ENCODE measurements at regions of chr10 and their contacts with region 1.

Region 1: DNA sequence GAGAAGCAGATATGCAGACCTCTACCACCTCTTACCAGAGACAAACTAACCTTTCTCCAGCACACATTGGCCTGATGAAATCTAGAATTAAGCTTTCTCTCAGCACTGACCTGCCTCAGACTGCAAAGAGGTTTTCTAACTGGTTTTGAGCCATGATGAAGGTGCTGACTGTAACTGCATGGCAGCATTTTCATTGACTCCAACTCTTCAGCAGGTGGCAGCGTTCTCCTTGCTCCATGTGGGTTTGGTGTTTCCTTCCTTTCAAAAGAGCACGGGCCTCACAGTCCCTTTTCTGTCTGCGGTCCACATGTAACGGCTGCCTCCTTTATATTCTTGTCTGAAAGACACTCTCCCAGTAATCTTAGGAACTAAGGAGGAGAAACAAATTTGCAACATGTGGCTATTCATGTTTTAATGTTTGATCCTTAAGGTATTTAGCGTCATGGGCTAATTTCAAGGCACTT is 12.6 kb downstream of the KLLN start:
- DNase-seq: peak; percentile 54
- ATAC-seq: peak; percentile 93 to 97

Region 2: DNA sequence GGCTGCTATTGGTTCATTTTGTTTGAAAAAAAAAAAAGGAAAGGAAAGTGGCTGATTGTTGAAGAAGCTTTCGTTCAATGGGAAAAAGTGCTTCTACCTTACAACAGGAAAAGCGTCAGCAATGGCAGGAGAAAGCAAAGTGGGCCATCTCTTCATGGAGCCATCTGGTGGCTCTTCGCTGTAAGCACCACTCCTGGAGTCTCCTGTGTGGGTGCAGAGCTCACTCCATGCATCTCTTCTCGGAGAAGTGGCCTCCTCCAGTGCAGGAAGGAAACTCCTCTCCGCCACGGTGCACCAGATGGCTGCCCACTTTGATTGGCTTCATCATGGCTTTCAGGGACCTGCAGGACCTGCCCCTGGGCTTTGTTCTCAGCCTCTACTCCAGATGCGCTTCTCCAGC is 263.6 kb after region 1 on chr10:
- intact Hi-C with region 1: loop called (anchors 5 to 10 kb)
- DNase-seq: peak; percentile 45
- ATAC-seq: peak; percentile 73 to 83

Region 3: DNA sequence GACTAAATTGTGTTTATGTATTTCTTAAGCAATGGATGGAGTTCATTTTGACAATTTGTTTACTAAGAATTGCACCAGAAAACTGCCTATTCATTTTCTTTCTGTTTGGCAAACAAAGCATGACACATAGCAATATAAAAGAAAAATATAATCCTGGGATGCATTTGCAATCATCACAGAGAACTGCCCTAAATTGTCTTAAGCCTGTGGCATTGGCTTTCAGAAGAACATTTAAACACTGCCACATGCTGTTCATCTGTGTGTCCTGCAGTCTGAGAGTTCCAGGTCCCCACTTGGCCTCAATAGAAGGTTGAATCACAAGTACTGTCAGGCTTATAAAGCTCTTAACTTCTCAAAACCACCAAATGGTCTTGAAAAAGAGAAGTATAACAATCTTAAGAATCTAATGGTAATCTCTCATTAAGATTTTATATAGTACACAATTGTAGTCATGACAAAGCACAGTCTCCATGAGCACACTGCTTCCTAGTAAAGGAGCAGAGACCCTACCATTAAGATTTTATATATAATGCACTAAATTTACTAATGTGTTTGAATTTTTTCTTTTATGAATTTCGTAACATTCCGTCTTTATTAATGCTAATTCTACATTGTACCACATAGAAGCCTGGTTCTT is 702.5 kb after region 1 on chr10:
- intact Hi-C with region 1: loop called (anchors 5 to 10 kb)
- DNase-seq: peak; percentile 25
- ATAC-seq: peak; percentile 92 to 94